Left ventricle myocardium superior (tissue), 1 donor: ENCODE measurements at regions of chr16 and their contacts with region 1.

Region 1: DNA sequence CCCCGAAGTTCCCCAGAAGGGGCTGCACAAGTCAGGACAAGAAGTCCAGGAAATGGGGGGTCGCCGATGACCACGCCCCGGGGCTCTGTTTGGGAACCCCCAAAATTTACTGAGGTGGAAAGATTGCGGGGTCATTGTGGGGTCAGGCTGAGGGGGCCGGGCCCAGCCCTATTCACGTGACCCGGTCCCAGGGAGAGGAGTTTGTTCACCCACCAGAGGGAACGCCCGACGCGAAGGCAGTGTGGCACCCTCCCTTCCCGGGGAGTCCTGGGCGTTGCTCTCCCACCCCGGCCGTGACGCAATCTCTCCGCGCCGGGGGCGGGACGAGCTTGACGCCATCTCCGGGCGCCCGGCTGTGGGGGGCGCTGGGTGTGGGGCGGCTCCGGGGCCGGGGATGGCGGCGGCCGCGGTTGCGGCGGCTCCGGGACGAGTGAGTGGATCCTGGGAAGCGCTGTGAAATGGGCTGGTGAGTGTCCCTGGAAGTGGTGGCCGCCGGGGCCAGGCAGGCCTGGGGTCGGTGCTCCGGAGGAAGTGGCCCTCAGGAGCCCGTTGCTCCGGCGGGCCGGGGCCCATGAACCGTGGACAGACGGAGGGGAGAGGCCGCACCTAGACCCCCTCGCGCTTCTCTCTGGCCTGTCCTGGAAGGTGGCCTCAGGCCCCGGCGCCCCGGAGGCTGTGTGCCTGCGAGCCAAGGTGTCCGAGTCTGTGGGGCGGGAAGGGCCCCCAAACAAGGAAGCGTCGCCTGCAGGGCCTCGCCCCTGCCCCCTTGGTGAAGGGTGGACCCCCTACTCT is at the start of gene ATXN1L:
- DNase-seq: peak; percentile 95
- ATAC-seq: peak; percentile 98
- total RNA-seq, gene ATXN1L: 14.4 TPM

Region 2: GRCh38 chr16:71883849-71884638 is 38.2 kb after region 1 on chr16 and contains the start of gene ZNF821:
- intact Hi-C with region 1: loop called (anchors 5 kb)
- DNase-seq: peak; percentile 88
- ATAC-seq: peak; percentile 94
- total RNA-seq, gene ZNF821: 3.2 TPM